ENCODE measurements at regions of chr21 and their contacts with region 1.

Region 1: GRCh38 chr21:14523234-14523633 is 22.9 kb downstream of the SAMSN1 start:
- DNase-seq: peak; percentile 63 to 86 (median 83)
- H3K4me3 ChIP-seq: peak overlapping the region; percentile 8 to 65 (median 64)
- H3K4me3 Mint-ChIP-seq: peak overlapping the region; percentile 86 to 96
- H3K27ac ChIP-seq: peak overlapping the region; percentile 65 to 89
- H3K27ac Mint-ChIP-seq: peak overlapping the region; percentile 92 to 98 (median 96)
- H3K4me1 ChIP-seq: peaks cover 67 to 96% of the 10 kb centered on the region in 2 donors
- H3K4me1 Mint-ChIP-seq: peaks cover 74% of the 10 kb centered on the region
- H3K27me3 ChIP-seq: no peaks in the 10 kb centered on the region
- H3K27me3 Mint-ChIP-seq: peaks cover 0 to 1% (median 0%) of the 10 kb centered on the region in 3 donors
- CTCF ChIP-seq: no peak

Region 2: GRCh38 chr21:14321042-14321441 is 202.2 kb before region 1 on chr21:
- intact Hi-C with region 1: no loop called
- DNase-seq: no peak
- H3K4me3 ChIP-seq: no peak overlapping the region
- H3K4me3 Mint-ChIP-seq: no peak overlapping the region
- H3K27ac ChIP-seq: no peak overlapping the region
- H3K27ac Mint-ChIP-seq: no peak overlapping the region
- H3K4me1 ChIP-seq: no peaks in the 10 kb centered on the region
- H3K4me1 Mint-ChIP-seq: peaks cover 2% of the 10 kb centered on the region
- H3K27me3 ChIP-seq: no peaks in the 10 kb centered on the region
- H3K27me3 Mint-ChIP-seq: peaks cover 0 to 1% (median 0%) of the 10 kb centered on the region in 3 donors
- CTCF ChIP-seq: no peak

Region 3: DNA sequence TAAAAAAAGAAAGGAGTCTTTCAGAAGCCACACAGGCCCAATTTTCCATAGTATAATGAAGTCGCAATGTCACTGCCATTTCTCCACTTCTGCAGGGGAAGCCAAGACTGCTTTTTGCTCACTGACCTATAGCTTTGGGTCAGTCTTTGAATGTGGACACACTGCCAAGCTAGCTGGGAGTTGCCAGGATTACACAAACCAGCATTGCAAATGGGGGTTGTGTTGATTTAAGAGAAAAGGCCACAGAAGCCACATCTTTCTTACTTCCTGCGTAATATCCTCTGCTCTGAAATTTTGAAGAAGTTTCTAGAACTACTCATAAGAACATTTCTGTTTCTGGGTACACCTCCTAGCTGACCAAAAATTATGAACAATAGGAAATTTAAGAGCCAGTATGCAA is 68.6 kb after region 1 on chr21:
- intact Hi-C with region 1: loop called in 1 of 2 experiments (anchors 10 kb)
- DNase-seq: peak; percentile 93 to 99 (median 96)
- H3K4me3 ChIP-seq: peak overlapping the region in 1 of 3 experiments; percentile 12
- H3K4me3 Mint-ChIP-seq: peak overlapping the region in 1 of 2 donors; percentile 22
- H3K27ac ChIP-seq: peak overlapping the region; percentile 47 to 88
- H3K27ac Mint-ChIP-seq: peak overlapping the region; percentile 91 to 99 (median 97)
- H3K4me1 ChIP-seq: peaks cover 28 to 44% of the 10 kb centered on the region in 2 donors
- H3K4me1 Mint-ChIP-seq: peaks cover 38% of the 10 kb centered on the region
- H3K27me3 ChIP-seq: no peaks in the 10 kb centered on the region
- H3K27me3 Mint-ChIP-seq: no peaks in the 10 kb centered on the region
- CTCF ChIP-seq: no peak

Region 4: GRCh38 chr21:14616303-14617039 is 93.2 kb after region 1 on chr21:
- intact Hi-C with region 1: no loop called
- DNase-seq: peak; percentile 6 to 74 (median 66)
- H3K4me3 ChIP-seq: no peak overlapping the region
- H3K4me3 Mint-ChIP-seq: no peak overlapping the region
- H3K27ac ChIP-seq: no peak overlapping the region
- H3K27ac Mint-ChIP-seq: peak overlapping the region in 2 of 7 donors; percentile 45 to 46
- H3K4me1 ChIP-seq: no peaks in the 10 kb centered on the region
- H3K4me1 Mint-ChIP-seq: peaks cover 8% of the 10 kb centered on the region
- H3K27me3 ChIP-seq: no peaks in the 10 kb centered on the region
- H3K27me3 Mint-ChIP-seq: no peaks in the 10 kb centered on the region
- CTCF ChIP-seq: no peak

Region 5: DNA sequence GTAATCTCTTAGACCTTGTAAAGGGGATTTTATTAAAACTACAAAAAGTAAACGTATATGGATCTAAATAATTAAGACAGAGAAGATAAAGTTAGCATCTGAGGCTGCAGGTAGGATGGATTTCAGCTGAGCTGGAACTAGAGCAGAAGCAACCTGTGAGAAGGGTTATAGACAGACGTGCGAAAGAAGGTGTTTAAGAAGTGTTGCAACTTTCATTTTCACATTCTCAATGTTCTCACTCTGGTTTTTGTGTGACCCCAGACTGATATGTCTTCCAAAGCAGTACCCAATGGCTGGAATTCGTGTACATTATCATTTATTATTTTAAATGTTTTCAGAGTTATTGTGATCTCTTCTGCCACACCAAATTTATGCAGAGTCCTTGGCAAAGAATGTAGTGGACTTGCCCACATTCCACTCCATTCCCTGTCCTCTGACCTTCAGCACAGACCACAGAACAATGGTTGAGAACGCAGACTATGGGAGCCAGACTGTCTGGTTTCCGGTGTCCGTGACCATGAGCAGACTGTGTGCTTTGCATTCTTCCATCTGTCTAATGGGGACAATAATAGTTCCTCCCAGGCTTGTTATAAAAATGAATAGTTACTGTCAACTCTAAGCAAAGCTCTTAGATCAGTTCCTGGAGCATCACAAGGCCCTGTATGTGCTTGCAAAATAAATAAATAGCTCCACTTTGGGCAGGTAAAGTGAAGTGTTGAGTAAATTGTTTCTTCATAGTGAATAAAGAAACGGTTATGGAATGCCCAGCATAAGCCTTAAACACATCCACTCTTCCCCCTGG is 163.4 kb after region 1 on chr21:
- intact Hi-C with region 1: loop called in 1 of 2 experiments (anchors 5 kb)
- DNase-seq: peak; percentile 25 to 58 (median 30)
- H3K4me3 ChIP-seq: peak overlapping the region in 1 of 3 experiments; percentile 43
- H3K4me3 Mint-ChIP-seq: peak overlapping the region in 1 of 2 donors; percentile 43
- H3K27ac ChIP-seq: peak overlapping the region; percentile 80 to 91
- H3K27ac Mint-ChIP-seq: peak overlapping the region; percentile 86 to 95 (median 92)
- H3K4me1 ChIP-seq: peaks cover 73 to 83% of the 10 kb centered on the region in 2 donors
- H3K4me1 Mint-ChIP-seq: peaks cover 77% of the 10 kb centered on the region
- H3K27me3 ChIP-seq: no peaks in the 10 kb centered on the region
- H3K27me3 Mint-ChIP-seq: no peaks in the 10 kb centered on the region
- CTCF ChIP-seq: no peak

Region 6: DNA sequence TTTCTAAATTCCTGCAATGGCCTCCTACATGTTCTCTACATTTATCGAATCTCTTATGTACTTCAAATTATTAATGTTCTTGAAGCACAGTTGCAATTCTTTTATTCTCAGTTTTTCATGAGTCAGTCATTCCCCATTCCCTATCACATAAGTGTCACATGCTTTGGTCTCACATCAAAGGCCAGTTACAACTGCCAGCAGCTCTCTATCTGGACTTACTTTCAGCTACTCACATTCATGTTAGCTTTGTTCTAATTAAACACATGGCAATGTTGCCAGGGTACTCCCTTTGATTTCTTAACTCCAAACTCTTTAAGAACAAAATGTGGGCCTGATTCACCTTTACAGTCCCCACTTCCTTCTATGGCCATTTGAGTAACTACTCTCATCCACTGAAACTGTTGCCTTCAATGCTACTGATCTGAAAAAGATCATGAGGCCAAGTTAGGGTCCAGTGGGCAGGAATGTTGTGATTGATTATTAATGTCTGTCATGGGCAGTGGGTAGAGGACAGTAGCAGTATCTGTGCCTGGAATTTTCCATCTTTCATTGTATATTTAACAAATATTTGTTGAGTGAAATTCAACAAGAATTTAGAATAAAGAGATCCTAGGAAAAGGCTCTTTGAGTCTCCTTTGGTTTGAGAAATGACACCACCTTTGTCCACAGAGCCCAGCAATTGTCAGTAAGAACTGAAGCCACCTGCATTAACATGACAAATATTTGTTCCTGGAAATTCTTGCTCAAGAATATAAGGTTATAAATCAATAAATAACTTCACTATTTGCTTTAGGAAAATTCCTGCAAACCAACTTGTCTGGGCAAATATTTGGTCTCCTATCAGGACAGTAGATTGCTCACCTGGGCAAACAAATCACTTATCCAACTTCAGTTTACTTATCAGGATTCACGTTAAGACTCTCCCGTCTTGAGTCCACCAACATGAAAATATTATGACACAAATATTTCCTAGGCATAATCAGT is 176.5 kb after region 1 on chr21:
- intact Hi-C with region 1: no loop called
- DNase-seq: no peak
- H3K4me3 ChIP-seq: no peak overlapping the region
- H3K4me3 Mint-ChIP-seq: no peak overlapping the region
- H3K27ac ChIP-seq: no peak overlapping the region
- H3K27ac Mint-ChIP-seq: no peak overlapping the region
- H3K4me1 ChIP-seq: no peaks in the 10 kb centered on the region
- H3K4me1 Mint-ChIP-seq: no peaks in the 10 kb centered on the region
- H3K27me3 ChIP-seq: no peaks in the 10 kb centered on the region
- H3K27me3 Mint-ChIP-seq: no peaks in the 10 kb centered on the region
- CTCF ChIP-seq: no peak

Region 7: GRCh38 chr21:14864211-14865021 is 341.2 kb after region 1 on chr21:
- intact Hi-C with region 1: loop called in 1 of 2 experiments (anchors 10 kb)
- DNase-seq: peak; percentile 55 to 93 (median 68)
- H3K4me3 ChIP-seq: no peak overlapping the region
- H3K4me3 Mint-ChIP-seq: no peak overlapping the region
- H3K27ac ChIP-seq: peak overlapping the region; percentile 10 to 54
- H3K27ac Mint-ChIP-seq: peak overlapping the region; percentile 58 to 94 (median 79)
- H3K4me1 ChIP-seq: peaks cover 56 to 69% of the 10 kb centered on the region in 2 donors
- H3K4me1 Mint-ChIP-seq: peaks cover 67% of the 10 kb centered on the region
- H3K27me3 ChIP-seq: no peaks in the 10 kb centered on the region
- H3K27me3 Mint-ChIP-seq: no peaks in the 10 kb centered on the region
- CTCF ChIP-seq: peak; percentile 67

Measured in CD14-positive monocyte (primary cell).